Mammary epithelial cell (primary cell): ENCODE measurements at regions of chrX and their contacts with region 1.

Region 1: DNA sequence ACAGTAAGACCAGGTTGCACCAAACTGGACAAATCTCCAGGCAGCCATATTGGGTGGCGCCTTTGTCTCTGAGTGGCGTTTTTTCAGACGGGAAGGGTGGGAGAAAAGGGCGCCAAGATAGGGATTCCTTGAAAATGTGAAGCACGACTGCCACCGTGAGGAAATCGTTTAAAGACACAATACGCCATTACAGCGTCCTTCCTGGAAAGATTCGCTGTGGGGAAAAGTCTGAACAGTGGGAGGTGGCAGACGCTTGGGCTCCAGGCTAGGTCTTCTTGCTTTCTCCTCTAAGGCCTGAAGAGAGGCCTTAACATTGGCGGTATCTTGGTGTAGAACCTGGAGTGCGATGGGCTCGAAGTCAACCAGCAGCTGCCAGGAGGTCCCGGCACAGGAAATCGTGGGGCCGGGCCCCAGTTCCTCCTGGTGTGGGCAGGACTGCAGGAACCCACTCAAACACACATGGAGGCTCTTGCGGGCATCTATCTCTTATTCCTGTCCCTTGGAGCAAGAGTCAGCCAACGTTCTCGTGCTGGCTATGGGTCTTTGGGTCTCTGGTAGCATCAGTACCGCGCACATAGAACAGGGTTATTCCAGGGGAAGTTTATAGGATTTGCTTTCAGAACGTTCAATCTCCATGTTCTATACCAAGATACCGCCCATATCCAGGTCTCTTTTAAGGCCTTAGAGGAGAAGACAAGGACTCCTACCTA is 208.8 kb downstream of the OR13H1 start:
- DNase-seq: peak; percentile 77
- H3K4me3 ChIP-seq: peak overlapping the region; percentile 40 to 54 (median 41)
- H3K27ac ChIP-seq: no peak overlapping the region
- H3K4me1 ChIP-seq: no peaks in the 10 kb centered on the region
- H3K27me3 ChIP-seq: no peaks in the 10 kb centered on the region
- CTCF ChIP-seq: peak; percentile 27 to 43

Region 2: GRCh38 chrX:131704136-131704695 is 48.4 kb before region 1 on chrX:
- CTCF ChIA-PET with region 1: no interaction called
- dilution Hi-C with region 1: no loop called
- in situ Hi-C with region 1: no loop called
- intact Hi-C with region 1: loop called (anchors 1 kb)
- DNase-seq: peak; percentile 69
- H3K4me3 ChIP-seq: peak overlapping the region; percentile 49 to 55 (median 51)
- H3K27ac ChIP-seq: peak overlapping the region; percentile 12
- H3K4me1 ChIP-seq: no peaks in the 10 kb centered on the region
- H3K27me3 ChIP-seq: no peaks in the 10 kb centered on the region
- CTCF ChIP-seq: peak; percentile 45 to 56

Region 3: GRCh38 chrX:131728295-131729145 is 24.1 kb before region 1 on chrX:
- CTCF ChIA-PET with region 1: no interaction called
- dilution Hi-C with region 1: no loop called
- in situ Hi-C with region 1: no loop called
- intact Hi-C with region 1: loop called (anchors 1 kb)
- DNase-seq: peak; percentile 78
- H3K4me3 ChIP-seq: peak overlapping the region; percentile 33 to 49 (median 40)
- H3K27ac ChIP-seq: peak overlapping the region; percentile 36
- H3K4me1 ChIP-seq: no peaks in the 10 kb centered on the region
- H3K27me3 ChIP-seq: no peaks in the 10 kb centered on the region
- CTCF ChIP-seq: peak; percentile 33 to 60

Region 4: DNA sequence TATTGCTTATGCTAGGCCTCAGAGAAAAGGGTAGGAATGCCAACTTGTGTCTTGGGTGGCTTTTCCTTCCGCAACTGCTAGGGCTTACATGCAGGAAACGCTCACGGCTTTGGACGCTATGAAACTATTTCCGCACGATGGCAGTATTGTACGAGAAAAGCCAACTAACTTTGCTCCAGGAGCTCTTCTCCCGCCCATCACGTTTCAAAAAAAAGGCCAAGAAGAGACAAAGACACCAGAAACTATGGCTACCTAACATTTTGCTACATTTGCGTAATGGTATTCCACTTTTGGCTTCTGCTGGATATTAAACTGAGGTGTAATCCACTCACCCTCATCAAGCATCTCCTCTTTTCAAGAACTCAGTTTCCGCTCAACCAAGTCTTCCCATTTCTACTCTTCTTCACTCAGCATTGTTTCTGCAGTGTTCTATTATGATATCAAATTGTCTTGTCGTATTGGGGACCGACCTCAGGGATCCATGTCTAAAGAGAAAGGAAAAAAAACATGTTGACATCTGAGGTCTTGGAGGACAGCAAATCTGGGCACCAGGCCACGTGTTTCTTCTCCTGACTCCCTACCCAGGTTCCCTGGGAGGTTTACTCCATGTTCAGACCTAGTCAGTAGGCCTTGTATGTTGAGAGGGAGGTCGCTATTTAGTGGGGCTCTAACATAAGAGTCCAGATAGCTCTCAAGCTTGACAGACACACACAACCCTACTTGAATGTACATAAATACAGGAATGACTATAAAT is 31.1 kb after region 1 on chrX:
- CTCF ChIA-PET with region 1: no interaction called
- dilution Hi-C with region 1: no loop called
- in situ Hi-C with region 1: no loop called
- intact Hi-C with region 1: loop called (anchors 1 kb)
- DNase-seq: peak; percentile 86
- H3K4me3 ChIP-seq: peak overlapping the region in 1 of 3 experiments; percentile 35
- H3K27ac ChIP-seq: peak overlapping the region; percentile 38
- H3K4me1 ChIP-seq: peaks cover 4% of the 10 kb centered on the region
- H3K27me3 ChIP-seq: no peaks in the 10 kb centered on the region
- CTCF ChIP-seq: peak; percentile 50 to 56

Region 5: DNA sequence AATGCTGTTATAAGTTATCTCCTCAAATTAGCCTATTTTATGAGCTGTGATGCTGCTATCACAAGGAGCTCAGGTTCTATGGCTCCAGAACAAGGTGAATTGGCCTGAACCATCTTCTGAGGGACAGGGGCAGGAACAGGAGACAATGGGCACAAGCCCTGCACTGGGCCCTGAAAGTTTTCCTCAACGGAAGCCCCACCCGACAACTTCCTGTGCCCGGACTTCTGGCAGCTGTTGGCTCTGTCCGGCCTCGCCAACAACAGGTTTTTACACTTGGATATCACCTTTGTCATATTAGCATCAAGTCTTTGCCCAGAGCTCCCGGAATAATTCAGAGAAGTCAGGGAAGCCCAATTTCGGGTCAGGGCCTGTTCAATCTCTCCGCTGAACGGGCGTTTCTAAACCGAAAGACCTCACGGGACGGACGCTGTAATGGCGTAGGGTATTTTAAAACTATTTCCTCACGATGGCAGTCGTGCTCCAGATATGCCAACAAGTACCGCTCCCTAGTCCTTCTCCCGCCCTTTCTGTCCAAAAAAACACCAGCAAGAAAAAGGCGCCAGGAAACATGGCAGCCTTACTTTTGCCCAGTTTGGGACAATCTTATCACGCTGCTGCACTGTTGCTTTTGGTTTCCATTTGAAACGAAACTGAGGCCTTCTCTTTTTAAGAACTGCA is 69.4 kb after region 1 on chrX:
- CTCF ChIA-PET with region 1: no interaction called
- dilution Hi-C with region 1: no loop called
- in situ Hi-C with region 1: no loop called
- intact Hi-C with region 1: loop called (anchors 2 kb)
- DNase-seq: peak; percentile 69
- H3K4me3 ChIP-seq: peak overlapping the region; percentile 36 to 48 (median 45)
- H3K27ac ChIP-seq: peak overlapping the region; percentile 55
- H3K4me1 ChIP-seq: no peaks in the 10 kb centered on the region
- H3K27me3 ChIP-seq: no peaks in the 10 kb centered on the region
- CTCF ChIP-seq: peak; percentile 31 to 43

Region 6: GRCh38 chrX:131885558-131885957 is 132.9 kb after region 1 on chrX:
- CTCF ChIA-PET with region 1: no interaction called
- dilution Hi-C with region 1: no loop called
- in situ Hi-C with region 1: no loop called
- intact Hi-C with region 1: no loop called
- DNase-seq: no peak
- H3K4me3 ChIP-seq: no peak overlapping the region
- H3K27ac ChIP-seq: no peak overlapping the region
- H3K4me1 ChIP-seq: no peaks in the 10 kb centered on the region
- H3K27me3 ChIP-seq: peaks cover 5% of the 10 kb centered on the region
- CTCF ChIP-seq: no peak

Region 7: DNA sequence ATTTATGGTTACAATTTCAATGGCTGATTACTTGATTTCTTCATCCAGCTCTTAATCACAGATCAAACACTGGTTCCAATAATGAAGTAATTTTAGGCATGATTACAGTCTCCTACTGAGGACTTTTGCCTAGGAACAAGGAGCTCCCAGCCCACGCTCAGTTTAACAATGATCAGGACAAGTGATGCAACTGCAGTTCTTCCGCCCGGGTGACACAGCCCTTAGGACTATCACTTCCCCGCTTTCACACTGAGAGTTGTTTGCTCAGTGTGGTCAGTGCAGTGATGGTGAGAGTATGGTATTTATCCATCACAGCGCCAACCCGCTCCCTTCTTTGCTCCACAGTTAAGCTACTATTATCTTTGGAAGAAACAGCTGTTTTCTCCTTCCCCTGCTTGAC is 939.4 kb after region 1 on chrX:
- CTCF ChIA-PET with region 1: no interaction called
- dilution Hi-C with region 1: no loop called
- in situ Hi-C with region 1: no loop called
- intact Hi-C with region 1: no loop called
- DNase-seq: no peak
- H3K4me3 ChIP-seq: no peak overlapping the region
- H3K27ac ChIP-seq: no peak overlapping the region
- H3K4me1 ChIP-seq: no peaks in the 10 kb centered on the region
- H3K27me3 ChIP-seq: no peaks in the 10 kb centered on the region
- CTCF ChIP-seq: no peak